ENCODE measurements at regions of chr9 and their contacts with region 1.

Region 1: DNA sequence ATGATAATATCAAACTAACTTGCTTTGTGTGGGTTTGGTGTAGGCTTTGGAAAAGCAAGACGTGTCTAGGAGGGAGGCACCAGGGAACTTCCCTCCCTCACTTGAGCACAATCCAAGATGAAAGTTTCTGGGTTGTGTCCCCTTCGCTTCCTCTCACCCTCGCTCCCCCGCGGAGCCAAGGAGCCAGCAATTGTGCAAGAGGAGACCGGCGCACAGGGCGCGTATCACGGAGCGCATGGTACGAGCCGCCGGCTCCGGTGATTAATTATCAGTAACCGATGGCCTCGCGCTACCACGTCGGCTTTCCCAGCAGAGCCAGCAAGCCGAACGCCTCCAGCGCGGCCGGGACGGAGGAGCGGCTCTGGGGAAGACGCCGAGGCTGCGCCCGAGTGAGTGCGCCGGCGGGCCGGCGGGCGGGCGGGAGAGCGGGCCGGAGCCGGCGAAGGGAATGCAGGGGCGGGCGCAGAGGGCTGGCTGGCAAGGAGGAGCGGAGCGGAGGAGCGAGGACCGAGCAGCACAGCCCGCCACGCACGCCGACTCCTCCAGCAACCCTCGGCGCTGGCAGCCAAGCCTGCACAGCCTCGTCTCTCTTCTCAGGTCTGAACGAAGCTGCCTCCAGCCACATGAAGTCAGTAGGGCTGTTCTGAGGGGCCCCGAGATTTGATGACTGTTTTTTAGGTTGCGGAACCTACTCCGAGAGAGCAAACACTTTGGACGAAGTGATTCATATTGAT is 143.6 kb downstream of the BNC2 start:
- DNase-seq: peak; percentile 47 to 71
- ATAC-seq: peak; percentile 83 to 94 (median 88)
- H3K4me3 ChIP-seq: peak overlapping the region; percentile 41 to 67 (median 58)
- H3K27ac ChIP-seq: peak overlapping the region; percentile 63 to 92 (median 80)
- H3K4me1 ChIP-seq: peaks cover 0 to 15% (median 4%) of the 10 kb centered on the region in 9 donors
- H3K27me3 ChIP-seq: peaks cover 0 to 62% (median 42%) of the 10 kb centered on the region in 7 donors
- CTCF ChIP-seq: no peak

Region 2: DNA sequence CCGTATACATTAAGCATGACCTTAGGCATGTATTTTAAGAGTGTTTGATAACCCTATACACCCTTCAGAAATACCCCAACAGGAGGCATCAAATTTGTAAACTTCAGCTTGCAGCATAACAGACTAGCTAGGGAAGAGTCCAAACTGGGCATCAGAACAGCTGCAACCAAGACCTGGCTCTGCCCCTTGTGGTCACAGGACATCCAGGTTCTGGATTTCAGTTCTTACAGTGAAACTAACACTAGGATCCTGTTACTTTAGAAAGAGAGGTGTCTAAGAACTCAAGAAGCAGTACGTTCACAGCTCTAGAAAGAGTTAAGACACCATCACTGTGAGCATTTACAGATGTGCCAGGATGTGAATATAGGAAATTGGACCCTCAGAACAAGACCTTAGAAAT is 86.2 kb before region 1 on chr9:
- intact Hi-C with region 1: loop called in 1 of 10 experiments (anchors 10 kb)
- DNase-seq: no peak
- ATAC-seq: no peak
- H3K4me3 ChIP-seq: no peak overlapping the region
- H3K27ac ChIP-seq: no peak overlapping the region
- H3K4me1 ChIP-seq: no peaks in the 10 kb centered on the region
- H3K27me3 ChIP-seq: no peaks in the 10 kb centered on the region
- CTCF ChIP-seq: peak in 1 of 9 donors; percentile 11

Region 3: DNA sequence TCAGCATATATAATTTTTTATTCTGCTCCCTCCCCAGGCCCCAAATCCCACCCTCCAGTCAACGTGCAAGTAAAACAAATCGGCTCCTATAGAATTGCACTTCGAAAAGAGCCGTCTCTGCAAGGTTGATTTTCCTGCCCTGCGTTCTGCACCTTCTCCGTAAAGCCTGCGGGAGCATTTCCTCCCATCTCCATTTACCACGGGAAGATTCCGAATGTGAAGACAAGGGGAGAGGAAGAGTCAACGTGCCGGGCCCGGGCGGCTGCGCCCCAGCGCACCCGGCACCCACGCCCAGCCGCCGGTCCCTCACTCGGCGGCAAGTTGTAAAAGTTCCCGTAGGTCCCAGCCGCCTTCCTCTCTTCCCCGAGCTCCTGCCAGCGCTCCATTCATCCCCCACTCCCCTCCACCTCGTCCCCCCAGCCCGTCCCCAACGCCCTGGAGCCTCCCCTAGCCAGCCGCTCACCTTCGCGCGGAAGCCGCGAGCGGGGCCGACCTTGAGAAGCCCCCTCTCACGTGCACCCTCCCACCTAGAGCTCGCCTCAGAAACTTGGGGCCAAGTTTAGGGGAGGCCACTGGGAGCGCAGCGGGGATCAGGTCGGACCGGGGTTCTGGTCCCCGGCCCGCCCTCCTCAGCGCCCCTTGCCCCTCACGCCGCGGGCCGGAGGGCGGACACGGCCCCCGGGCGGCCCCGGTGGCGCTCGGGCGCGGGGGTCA is 143.2 kb after region 1 on chr9:
- intact Hi-C with region 1: loop called in 2 of 10 experiments (anchors 5 to 10 kb)
- DNase-seq: peak; percentile 11 to 17
- ATAC-seq: peak; percentile 4 to 55 (median 24)
- H3K4me3 ChIP-seq: peak overlapping the region; percentile 39 to 75 (median 64)
- H3K27ac ChIP-seq: peak overlapping the region in 9 of 10 donors; percentile 30 to 87 (median 77)
- H3K4me1 ChIP-seq: peaks cover 0 to 35% (median 22%) of the 10 kb centered on the region in 9 donors
- H3K27me3 ChIP-seq: peaks cover 0 to 78% (median 61%) of the 10 kb centered on the region in 7 donors
- CTCF ChIP-seq: no peak